ENCODE measurements at regions of chr10 and their contacts with region 1.

Region 1: GRCh38 chr10:29412485-29412884 is 123.6 kb downstream of the LYZL1 start:
- DNase-seq: no peak
- H3K4me3 ChIP-seq: no peak overlapping the region
- H3K27ac ChIP-seq: no peak overlapping the region
- H3K4me1 ChIP-seq: peaks cover 4% of the 10 kb centered on the region; the same call in 1 of the 2 replicates
- H3K27me3 ChIP-seq: no peaks in the 10 kb centered on the region
- CTCF ChIP-seq: no peak

Region 2: DNA sequence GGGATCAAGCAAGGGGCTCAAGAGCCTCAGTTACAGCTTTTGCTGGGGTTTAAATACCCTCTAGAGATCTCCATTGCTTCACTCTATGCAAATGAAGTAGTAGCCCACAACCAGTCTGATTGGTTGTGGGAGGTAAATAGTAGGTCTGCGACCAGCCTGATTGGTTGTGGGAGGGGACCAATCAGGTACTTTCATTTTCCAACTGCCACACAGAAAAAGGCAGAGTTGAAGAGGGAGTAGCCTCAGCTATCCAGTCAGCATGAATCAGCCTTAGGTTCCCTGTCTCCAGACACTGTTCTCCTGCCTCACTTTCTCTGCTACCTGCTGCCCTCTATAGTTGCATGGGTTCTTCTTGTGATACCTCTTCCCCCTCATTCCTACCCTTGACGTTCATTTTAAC is 238.2 kb before region 1 on chr10:
- CTCF ChIA-PET with region 1: no interaction called
- POLR2A ChIA-PET with region 1: interaction called, 28 read pairs
- intact Hi-C with region 1: no loop called
- DNase-seq: no peak
- H3K4me3 ChIP-seq: no peak overlapping the region
- H3K27ac ChIP-seq: no peak overlapping the region
- H3K4me1 ChIP-seq: no peaks in the 10 kb centered on the region
- H3K27me3 ChIP-seq: no peaks in the 10 kb centered on the region
- CTCF ChIP-seq: no peak

Region 3: GRCh38 chr10:29394326-29394932 is 18.1 kb before region 1 on chr10:
- CTCF ChIA-PET with region 1: no interaction called
- POLR2A ChIA-PET with region 1: no interaction called
- intact Hi-C with region 1: no loop called
- DNase-seq: no peak
- H3K4me3 ChIP-seq: no peak overlapping the region
- H3K27ac ChIP-seq: no peak overlapping the region
- H3K4me1 ChIP-seq: no peaks in the 10 kb centered on the region
- H3K27me3 ChIP-seq: peaks cover 4% of the 10 kb centered on the region; the same call in 1 of the 2 replicates
- CTCF ChIP-seq: no peak

Region 4: DNA sequence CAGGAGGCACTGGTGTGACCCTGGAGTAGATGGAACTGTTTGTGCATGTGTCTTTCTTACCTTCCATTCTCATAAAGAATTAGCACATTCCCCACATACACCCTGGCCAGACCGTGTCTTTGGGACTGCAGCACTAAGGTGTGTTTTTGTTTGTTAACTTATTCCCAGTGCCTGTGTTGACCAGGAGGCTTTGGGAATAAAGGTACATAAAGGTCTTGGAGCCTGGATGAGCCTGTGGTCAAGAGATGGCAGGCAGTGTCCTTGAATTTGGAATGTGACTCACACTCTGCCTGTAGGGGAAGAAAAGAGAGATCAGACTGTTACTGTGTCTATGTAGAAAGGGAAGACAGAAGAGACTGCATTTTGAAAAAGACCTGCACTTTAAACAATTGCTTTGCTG is 13.9 kb after region 1 on chr10:
- CTCF ChIA-PET with region 1: no interaction called
- POLR2A ChIA-PET with region 1: no interaction called
- intact Hi-C with region 1: no loop called
- DNase-seq: no peak
- H3K4me3 ChIP-seq: no peak overlapping the region
- H3K27ac ChIP-seq: no peak overlapping the region
- H3K4me1 ChIP-seq: no peaks in the 10 kb centered on the region
- H3K27me3 ChIP-seq: no peaks in the 10 kb centered on the region
- CTCF ChIP-seq: no peak

Measured in PC-9 (cell line).